ENCODE measurements at regions of chr19 and their contacts with region 1.

Region 1: DNA sequence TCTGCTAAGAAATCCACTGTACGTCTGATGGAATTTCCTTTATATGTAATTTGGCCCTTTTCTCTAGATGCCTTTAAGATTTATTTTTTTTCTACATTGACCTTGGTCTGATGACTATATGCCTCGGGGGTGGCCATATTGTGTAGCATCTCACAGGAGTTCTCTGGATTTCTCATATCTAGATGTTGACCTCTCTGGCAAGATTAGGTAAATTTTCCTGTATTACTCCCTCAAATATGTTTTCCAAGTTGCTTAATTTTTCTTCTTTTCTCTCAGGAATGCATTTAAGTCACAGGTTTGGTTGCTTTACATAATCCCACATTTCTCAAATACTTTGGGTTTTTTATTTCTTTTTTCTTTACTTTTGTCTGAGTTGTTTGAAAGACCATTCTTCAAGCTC is 36.1 kb downstream of the ACSBG2 start:
- DNase-seq: no peak
- ATAC-seq: no peak
- H3K4me3 Mint-ChIP-seq: no peak overlapping the region
- H3K27ac Mint-ChIP-seq: no peak overlapping the region
- H3K4me1 Mint-ChIP-seq: no peaks in the 10 kb centered on the region
- H3K27me3 Mint-ChIP-seq: peaks cover 9% of the 10 kb centered on the region
- CTCF ChIP-seq: no peak

Region 2: GRCh38 chr19:6312018-6312417 is 140.5 kb after region 1 on chr19:
- CTCF ChIA-PET with region 1: no interaction called
- POLR2A ChIA-PET with region 1: no interaction called
- intact Hi-C with region 1: loop called (anchors 10 kb)
- DNase-seq: no peak
- ATAC-seq: no peak
- H3K4me3 Mint-ChIP-seq: no peak overlapping the region
- H3K27ac Mint-ChIP-seq: no peak overlapping the region
- H3K4me1 Mint-ChIP-seq: no peaks in the 10 kb centered on the region
- H3K27me3 Mint-ChIP-seq: no peaks in the 10 kb centered on the region
- CTCF ChIP-seq: no peak